AG04449 (cell line): ENCODE measurements at regions of chr22 and their contacts with region 1.

Region 1: DNA sequence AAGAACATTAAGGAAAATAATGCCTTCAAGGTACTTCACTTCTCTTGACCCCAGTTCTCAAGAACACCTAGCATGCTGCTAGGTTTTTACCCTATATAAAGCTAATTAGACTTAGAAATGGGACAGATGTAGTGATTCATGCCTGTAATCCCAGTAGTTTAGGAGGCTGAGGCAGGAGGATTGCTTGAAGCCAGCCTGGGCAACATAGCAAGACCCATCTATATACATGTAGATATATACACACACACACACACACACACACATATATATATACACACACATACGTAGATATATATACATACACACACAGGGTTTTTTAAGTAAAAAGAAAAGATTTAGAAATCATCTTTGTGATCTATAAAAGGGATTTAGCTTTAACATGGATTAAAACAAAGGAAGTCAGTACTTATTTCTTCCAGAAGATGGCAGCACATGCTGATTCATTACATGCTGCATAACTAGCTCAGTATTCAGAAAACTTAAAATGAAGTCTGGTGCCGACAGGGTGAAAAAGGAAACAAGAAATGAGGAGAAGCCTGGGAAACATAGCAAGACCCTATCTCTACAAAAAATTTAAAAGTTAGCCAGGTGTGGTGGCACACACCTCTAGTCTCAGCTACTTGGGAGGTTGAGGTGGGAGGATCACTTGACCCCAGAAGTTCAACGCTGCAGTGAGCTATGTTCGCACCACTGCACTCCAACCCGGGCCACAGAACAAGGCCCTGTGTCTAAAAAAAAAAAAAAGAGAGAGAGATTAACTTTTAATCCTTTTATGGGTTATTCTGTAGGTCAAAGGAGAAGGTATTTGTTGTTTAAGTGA is 28.5 kb upstream of the RBX1 start:
- DNase-seq: no peak
- H3K4me3 ChIP-seq: no peak overlapping the region
- CTCF ChIP-seq: peak; percentile 47

Region 2: DNA sequence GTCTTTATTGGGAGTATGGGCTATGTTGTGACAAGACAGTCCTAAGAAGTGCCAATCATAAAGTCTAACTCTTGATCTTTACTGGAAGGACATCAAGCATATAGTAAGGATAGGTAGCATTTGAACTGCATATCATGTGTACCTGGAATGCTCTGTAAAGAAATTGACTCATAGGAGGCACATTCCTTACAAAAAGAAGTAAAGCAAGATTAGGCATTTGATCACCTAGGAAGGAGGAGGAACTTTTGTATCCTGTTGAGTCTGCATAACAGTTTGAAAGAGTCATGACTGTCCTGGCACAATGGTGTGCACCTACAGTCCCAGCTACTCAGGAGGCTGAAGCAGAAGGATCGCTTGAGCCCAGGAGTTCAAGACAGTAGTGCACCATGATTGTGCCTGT is 18.6 kb before region 1 on chr22:
- CTCF ChIA-PET with region 1: interaction called, 85 read pairs
- POLR2A ChIA-PET with region 1: no interaction called
- DNase-seq: no peak
- H3K4me3 ChIP-seq: no peak overlapping the region
- CTCF ChIP-seq: no peak

Region 3: GRCh38 chr22:40950962-40951794 is 28.5 kb after region 1 on chr22 and contains the start of gene RBX1:
- CTCF ChIA-PET with region 1: interaction called, 21 read pairs
- POLR2A ChIA-PET with region 1: interaction called, 5 read pairs
- DNase-seq: peak; percentile 91
- H3K4me3 ChIP-seq: peak within 1 kb of the TSS; percentile 92
- CTCF ChIP-seq: no peak

Region 4: GRCh38 chr22:41091132-41092022 is 168.7 kb after region 1 on chr22:
- CTCF ChIA-PET with region 1: interaction called, 16 read pairs
- POLR2A ChIA-PET with region 1: no interaction called
- DNase-seq: peak; percentile 88
- H3K4me3 ChIP-seq: peak overlapping the region; percentile 83
- CTCF ChIP-seq: no peak

Region 5: DNA sequence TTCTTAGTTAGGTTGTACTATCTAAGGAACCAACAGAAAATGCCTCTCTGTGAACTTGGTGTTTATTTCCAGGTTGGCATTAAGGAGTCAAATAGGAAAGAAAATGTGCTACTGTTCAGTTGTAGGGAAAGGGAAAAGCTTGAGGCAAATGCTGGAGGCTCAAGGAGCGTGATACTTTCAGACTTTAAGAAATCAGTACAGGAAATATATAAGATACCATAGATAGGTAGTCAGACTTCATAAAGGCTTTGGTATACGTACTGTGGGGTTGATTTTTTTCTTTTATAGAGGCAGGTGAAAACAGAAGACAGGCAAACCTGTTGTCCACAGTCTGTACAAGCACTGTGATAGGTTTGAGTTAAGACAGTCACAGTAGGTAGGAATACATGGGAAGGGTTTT is 200.5 kb after region 1 on chr22:
- CTCF ChIA-PET with region 1: interaction called, 15 read pairs
- POLR2A ChIA-PET with region 1: no interaction called
- DNase-seq: no peak
- H3K4me3 ChIP-seq: no peak overlapping the region
- CTCF ChIP-seq: no peak

Region 6: DNA sequence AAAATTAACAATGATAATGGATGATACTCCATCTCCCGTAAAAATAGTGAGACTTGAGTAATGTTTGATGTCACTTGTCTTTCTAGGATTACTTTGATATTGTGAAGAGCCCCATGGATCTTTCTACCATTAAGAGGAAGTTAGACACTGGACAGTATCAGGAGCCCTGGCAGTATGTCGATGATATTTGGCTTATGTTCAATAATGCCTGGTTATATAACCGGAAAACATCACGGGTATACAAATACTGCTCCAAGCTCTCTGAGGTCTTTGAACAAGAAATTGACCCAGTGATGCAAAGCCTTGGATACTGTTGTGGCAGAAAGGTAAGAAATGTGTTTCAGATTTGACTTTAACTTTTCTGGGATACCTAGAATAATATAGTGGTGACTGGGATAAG is 234.4 kb after region 1 on chr22:
- CTCF ChIA-PET with region 1: interaction called, 15 read pairs
- POLR2A ChIA-PET with region 1: no interaction called
- DNase-seq: no peak
- H3K4me3 ChIP-seq: no peak overlapping the region
- CTCF ChIP-seq: no peak